ENCODE measurements at regions of chr1 and their contacts with region 1.

Region 1: DNA sequence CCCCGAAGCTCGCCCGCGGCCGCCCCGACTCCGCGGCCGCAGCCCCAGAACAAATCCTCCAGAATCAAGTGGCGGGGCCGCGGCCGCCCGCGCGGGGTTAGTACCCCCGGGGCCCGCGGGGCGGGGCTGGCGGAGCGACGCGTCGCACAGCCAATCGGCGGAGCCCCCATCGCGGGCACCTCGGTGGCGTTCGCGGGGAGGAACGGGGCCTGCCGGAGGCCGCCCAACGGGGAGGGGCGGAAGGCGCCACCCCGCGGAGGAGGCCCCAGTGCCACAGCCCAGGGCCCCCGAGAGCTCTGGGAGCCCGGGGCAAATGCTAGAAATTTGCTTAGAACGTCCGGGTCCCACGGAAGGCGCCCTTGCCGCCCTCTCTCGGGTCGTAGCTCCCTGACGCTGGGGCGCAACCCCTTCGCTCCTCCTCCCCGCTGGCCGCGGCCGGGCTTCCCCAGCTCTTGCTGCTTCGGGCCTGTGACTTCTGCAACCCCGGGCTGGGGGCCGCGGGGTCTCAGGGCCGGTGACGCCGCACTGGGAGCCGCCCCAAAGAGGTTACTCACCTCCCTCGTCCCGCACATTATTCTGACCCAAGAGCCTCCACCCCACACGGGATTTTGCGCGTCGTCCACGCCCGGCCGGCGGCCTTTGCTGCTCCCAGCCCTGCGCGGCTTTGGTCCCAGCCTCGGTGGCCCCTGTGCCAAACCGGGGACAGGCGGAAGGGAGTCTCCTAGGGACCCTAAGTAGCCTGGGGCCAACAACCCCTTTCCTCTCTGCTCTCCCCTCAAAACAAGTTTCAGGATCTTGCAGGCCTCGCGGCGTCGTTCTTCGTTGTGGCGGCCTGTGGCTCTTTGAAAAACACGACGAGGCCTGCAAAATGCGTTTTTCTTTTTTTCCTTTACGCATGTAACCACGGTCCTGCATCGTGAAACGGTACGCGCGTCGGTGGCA is at the start of gene RUNX3:
- DNase-seq: peak; percentile 93 to 94 (median 94)
- H3K4me3 ChIP-seq: peak within 1 kb of the TSS; percentile 81 to 84
- H3K4me3 Mint-ChIP-seq: peak within 1 kb of the TSS; percentile 87 to 98 (median 97)
- H3K27ac ChIP-seq: peak within 1 kb of the TSS; percentile 98
- H3K27ac Mint-ChIP-seq: peak within 1 kb of the TSS; percentile 99 to 100 (median 100)
- H3K4me1 ChIP-seq: peaks cover 62% of the 10 kb centered on the region
- H3K4me1 Mint-ChIP-seq: peaks cover 20 to 81% (median 42%) of the 10 kb centered on the region in 4 donors
- H3K27me3 ChIP-seq: no peaks in the 10 kb centered on the region
- H3K27me3 Mint-ChIP-seq: no peaks in the 10 kb centered on the region
- total RNA-seq, gene RUNX3: 105 to 112 TPM

Region 2: DNA sequence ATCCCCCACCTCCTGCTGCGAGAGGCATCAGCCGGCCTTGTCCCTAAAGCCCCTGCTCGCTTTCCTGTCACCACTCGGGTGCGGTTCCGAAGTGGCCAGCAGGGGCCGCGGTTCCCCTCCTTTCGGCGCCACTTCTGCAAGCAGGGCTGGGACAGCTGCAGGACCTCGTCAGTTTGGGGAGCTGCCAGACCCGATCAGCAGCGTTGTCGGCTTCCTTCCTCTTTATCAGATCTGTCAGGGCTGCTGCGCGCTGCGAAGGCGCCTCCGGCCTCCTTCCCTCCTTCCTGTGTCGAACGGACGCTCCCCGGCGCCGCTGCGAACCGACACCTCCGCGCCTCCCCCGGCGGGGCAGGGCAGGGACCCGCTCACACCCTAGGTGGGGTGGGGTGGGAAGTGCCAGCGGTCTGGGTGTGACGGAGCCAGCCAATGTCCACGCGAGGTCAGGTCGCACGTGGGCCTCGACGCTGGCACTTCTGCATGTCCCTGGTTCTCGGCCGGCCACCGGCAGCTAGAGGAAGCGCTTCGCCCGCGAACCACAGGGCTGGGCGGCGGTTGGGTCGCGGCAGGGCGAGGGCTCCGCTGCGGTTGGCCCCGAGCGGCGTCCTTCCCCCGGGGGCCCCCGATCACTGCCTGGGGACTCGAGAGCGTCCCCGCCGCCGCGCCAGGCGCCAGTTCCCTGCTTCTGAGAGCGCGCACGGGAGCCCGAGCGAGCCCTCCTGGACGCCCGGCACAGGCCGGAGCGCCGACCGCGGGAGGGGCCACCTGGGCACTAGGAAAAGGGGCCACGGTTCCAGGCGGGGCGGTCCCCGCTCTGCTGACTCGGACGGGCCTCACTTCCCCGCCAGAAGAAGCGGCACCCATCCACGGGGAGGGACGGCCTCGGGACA is 82.2 kb before region 1 on chr1:
- CTCF ChIA-PET with region 1: interaction called, 133 read pairs
- POLR2A ChIA-PET with region 1: interaction called, 32 read pairs
- intact Hi-C with region 1: loop called (anchors 1 kb)
- DNase-seq: peak; percentile 88 to 91 (median 89)
- H3K4me3 ChIP-seq: peak overlapping the region; percentile 18 to 73
- H3K4me3 Mint-ChIP-seq: peak overlapping the region; percentile 68 to 88 (median 78)
- H3K27ac ChIP-seq: peak overlapping the region; percentile 56
- H3K27ac Mint-ChIP-seq: peak overlapping the region; percentile 52 to 94 (median 81)
- H3K4me1 ChIP-seq: peaks cover 15% of the 10 kb centered on the region
- H3K4me1 Mint-ChIP-seq: peaks cover 7 to 22% (median 12%) of the 10 kb centered on the region in 4 donors
- H3K27me3 ChIP-seq: no peaks in the 10 kb centered on the region
- H3K27me3 Mint-ChIP-seq: no peaks in the 10 kb centered on the region

Region 3: GRCh38 chr1:24955161-24955560 is 24.7 kb after region 1 on chr1:
- CTCF ChIA-PET with region 1: interaction called, 8 read pairs
- POLR2A ChIA-PET with region 1: interaction called, 12 read pairs
- intact Hi-C with region 1: loop called (anchors 2 kb)
- DNase-seq: peak; percentile 33 to 89 (median 52)
- H3K4me3 ChIP-seq: no peak overlapping the region
- H3K4me3 Mint-ChIP-seq: peak overlapping the region in 6 of 8 donors; percentile 47 to 79 (median 70)
- H3K27ac ChIP-seq: peak overlapping the region; percentile 15
- H3K27ac Mint-ChIP-seq: peak overlapping the region; percentile 83 to 94 (median 93)
- H3K4me1 ChIP-seq: peaks cover 58% of the 10 kb centered on the region
- H3K4me1 Mint-ChIP-seq: peaks cover 28 to 71% (median 56%) of the 10 kb centered on the region in 4 donors
- H3K27me3 ChIP-seq: no peaks in the 10 kb centered on the region
- H3K27me3 Mint-ChIP-seq: no peaks in the 10 kb centered on the region

Region 4: GRCh38 chr1:24996983-24997893 is 66.8 kb after region 1 on chr1:
- CTCF ChIA-PET with region 1: interaction called, 10 read pairs
- POLR2A ChIA-PET with region 1: interaction called, 38 read pairs
- intact Hi-C with region 1: no loop called
- DNase-seq: no peak
- H3K4me3 ChIP-seq: no peak overlapping the region
- H3K4me3 Mint-ChIP-seq: peak overlapping the region in 4 of 8 donors; percentile 24 to 53 (median 40)
- H3K27ac ChIP-seq: no peak overlapping the region
- H3K27ac Mint-ChIP-seq: peak overlapping the region in 5 of 7 donors; percentile 36 to 90 (median 77)
- H3K4me1 ChIP-seq: peaks cover 57% of the 10 kb centered on the region
- H3K4me1 Mint-ChIP-seq: peaks cover 31 to 86% (median 52%) of the 10 kb centered on the region in 4 donors
- H3K27me3 ChIP-seq: no peaks in the 10 kb centered on the region
- H3K27me3 Mint-ChIP-seq: no peaks in the 10 kb centered on the region

Region 5: DNA sequence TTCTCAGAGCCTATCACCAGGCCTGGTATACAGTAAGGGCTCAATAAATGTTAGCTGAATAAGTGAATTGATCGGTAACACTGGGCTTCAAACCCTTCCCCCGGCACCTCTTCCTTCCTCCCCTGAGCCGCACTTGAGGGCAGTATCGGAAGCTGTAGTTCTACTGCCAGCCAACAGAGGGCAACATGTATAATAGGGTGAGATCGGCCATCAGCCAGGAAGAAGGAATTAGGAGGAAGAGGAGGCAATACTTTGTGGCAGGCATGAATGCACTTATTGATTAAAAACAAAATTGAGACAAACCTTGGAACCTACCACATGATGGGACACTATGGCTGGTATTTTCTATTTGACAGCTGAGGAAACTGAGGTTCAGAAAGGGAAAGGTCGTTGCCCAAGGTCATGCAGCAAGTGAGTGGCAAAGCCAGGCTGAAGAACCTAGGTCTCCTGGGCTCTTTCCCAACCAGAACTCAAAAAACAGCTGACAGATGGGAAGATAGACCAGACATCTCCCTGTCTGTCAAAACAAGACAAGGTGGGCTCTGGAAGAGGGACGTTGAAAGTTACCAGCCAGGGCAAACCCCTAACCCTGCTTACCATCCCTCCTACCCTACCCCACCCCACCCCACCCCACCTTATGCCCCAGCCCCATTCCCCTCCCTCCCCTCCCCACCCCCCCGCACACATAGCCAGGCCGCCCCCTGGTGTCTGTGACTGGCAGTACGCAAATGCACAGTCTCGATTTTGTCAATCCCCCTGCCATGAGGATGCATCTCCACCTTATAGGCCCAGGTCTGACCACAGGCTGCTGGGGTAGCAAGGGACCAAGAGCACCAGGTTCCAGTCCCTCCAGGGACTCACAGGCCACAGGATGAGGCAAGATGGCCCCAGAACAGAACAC is 106.9 kb after region 1 on chr1:
- CTCF ChIA-PET with region 1: interaction called, 296 read pairs
- POLR2A ChIA-PET with region 1: interaction called, 206 read pairs
- intact Hi-C with region 1: loop called (anchors 1 kb)
- DNase-seq: peak; percentile 64 to 70 (median 65)
- H3K4me3 ChIP-seq: no peak overlapping the region
- H3K4me3 Mint-ChIP-seq: peak overlapping the region in 7 of 8 donors; percentile 4 to 61 (median 43)
- H3K27ac ChIP-seq: no peak overlapping the region
- H3K27ac Mint-ChIP-seq: peak overlapping the region; percentile 22 to 91 (median 74)
- H3K4me1 ChIP-seq: peaks cover 56% of the 10 kb centered on the region
- H3K4me1 Mint-ChIP-seq: peaks cover 9 to 26% (median 21%) of the 10 kb centered on the region in 4 donors
- H3K27me3 ChIP-seq: no peaks in the 10 kb centered on the region
- H3K27me3 Mint-ChIP-seq: peaks cover 0 to 1% of the 10 kb centered on the region in 2 donors